Breast epithelium (tissue), 4 donors: ENCODE measurements at regions of chr12 and their contacts with region 1.

Region 1: DNA sequence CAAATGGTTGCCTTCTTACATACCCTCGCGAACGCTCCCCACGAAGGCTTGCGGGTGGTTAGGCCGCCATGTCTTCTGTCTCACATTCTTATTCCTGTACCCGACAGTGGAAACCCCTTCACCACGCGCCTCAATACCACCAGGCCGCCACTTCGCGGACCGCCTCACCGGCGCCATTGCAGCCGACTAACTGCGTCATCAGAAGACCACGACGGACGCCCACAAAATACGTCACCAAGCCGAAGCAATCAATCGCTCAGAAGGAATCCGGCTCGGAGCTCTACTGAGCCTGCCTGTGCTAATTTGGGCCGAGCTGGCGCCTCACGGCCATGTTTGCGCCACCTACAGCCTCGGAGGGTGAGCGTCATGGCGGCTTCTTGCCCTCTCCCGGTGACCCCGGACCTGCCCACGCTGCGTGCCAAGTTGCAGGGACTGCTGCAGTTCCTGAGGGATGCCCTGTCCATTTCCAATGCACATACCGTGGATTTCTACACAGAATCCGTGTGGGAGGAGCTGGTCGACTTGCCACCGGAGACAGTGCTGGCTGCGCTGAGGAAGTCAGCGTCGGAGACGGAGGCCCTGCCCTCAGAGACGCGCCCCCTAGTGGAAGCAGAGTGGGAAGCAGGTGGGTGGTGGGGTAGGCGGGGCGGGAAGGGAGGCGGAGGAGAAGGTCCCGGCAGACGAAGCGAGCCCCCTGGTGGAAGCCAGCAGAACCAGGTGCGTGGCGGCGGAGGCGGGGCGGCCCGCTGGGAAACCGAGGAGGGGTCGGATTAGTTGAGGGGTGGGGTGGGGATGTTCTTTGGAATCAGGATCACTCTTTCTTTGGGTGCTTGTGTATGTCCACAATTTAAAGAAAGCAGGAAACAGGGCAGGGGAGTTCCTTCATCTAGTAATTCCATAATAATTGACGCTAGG is at the starts of genes CCDC59 and METTL25:
- DNase-seq: peak; percentile 96 to 97
- H3K4me3 ChIP-seq: peak within 1 kb of the TSS; percentile 82 to 94 (median 84)
- H3K27ac ChIP-seq: peak within 1 kb of the TSS; percentile 97
- H3K4me1 ChIP-seq: peaks cover 0 to 9% of the 10 kb centered on the region in 2 donors
- H3K27me3 ChIP-seq: no peaks in the 10 kb centered on the region
- CTCF ChIP-seq: peak; percentile 82 to 99 (median 96)
- POLR2A ChIP-seq: peak; percentile 74
- total RNA-seq, gene CCDC59: 53.7 to 95.9 (median 64.5) TPM
- total RNA-seq, gene METTL25: 10.4 to 38.9 (median 25.9) TPM

Region 2: GRCh38 chr12:82069931-82070514 is 288.4 kb before region 1 on chr12:
- intact Hi-C with region 1: loop called (anchors 5 kb)
- DNase-seq: no peak
- H3K4me3 ChIP-seq: no peak overlapping the region
- H3K27ac ChIP-seq: no peak overlapping the region
- H3K4me1 ChIP-seq: no peaks in the 10 kb centered on the region
- H3K27me3 ChIP-seq: no peaks in the 10 kb centered on the region
- CTCF ChIP-seq: no peak
- POLR2A ChIP-seq: no peak